Caco-2 (cell line): ENCODE measurements at regions of chr1 and their contacts with region 1.

Region 1: DNA sequence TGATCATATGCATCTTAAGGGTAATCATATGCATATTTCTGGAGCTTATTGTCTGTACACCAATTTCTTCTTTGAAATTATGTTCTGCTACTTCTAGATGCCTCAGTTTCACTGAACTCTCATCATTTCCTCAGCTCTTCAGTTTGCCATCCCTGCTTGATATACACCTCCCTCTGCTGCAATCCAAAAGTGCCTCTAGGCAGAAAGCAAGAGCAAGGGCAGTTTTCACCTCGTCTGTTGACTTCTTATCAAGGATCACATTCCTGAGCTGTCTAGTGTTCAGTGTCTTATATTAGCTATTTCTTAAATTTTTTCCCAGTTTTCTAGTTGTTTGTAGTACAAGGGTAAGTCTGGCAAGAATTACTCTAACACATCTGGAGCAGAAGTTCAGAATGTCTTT is 354.4 kb upstream of the DAB1 start:
- DNase-seq: no peak
- H3K4me3 ChIP-seq: no peak overlapping the region
- H3K4me3 Mint-ChIP-seq: no peak overlapping the region
- H3K27ac Mint-ChIP-seq: no peak overlapping the region
- H3K4me1 ChIP-seq: no peaks in the 10 kb centered on the region
- H3K4me1 Mint-ChIP-seq: no peaks in the 10 kb centered on the region
- H3K27me3 ChIP-seq: no peaks in the 10 kb centered on the region
- H3K27me3 Mint-ChIP-seq: peaks cover 10% of the 10 kb centered on the region
- CTCF ChIP-seq: no peak

Region 2: DNA sequence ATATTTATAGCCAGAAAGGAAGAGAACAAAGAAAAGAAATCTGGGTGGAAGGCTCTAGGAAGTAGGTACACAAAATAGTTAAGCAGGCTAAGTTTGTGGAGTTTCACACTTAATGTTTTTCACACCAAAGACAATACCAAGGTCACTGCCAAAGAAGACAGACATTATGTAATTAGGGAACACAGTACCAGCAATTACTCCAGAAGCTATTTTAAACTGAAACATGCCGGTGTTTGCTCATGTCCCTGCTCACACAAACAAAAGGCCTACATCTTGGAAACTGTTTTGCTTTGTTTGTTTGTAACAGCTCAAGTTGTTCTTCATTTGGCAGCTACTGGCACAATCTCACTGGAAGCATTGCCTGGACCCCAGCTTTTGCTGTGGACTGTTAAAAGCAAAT is 265.8 kb before region 1 on chr1:
- CTCF ChIA-PET with region 1: no interaction called
- POLR2A ChIA-PET with region 1: no interaction called
- intact Hi-C with region 1: loop called (anchors 5 kb)
- DNase-seq: no peak
- H3K4me3 ChIP-seq: no peak overlapping the region
- H3K4me3 Mint-ChIP-seq: no peak overlapping the region
- H3K27ac Mint-ChIP-seq: no peak overlapping the region
- H3K4me1 ChIP-seq: no peaks in the 10 kb centered on the region
- H3K4me1 Mint-ChIP-seq: no peaks in the 10 kb centered on the region
- H3K27me3 ChIP-seq: no peaks in the 10 kb centered on the region
- H3K27me3 Mint-ChIP-seq: peaks cover 9% of the 10 kb centered on the region
- CTCF ChIP-seq: no peak

Region 3: DNA sequence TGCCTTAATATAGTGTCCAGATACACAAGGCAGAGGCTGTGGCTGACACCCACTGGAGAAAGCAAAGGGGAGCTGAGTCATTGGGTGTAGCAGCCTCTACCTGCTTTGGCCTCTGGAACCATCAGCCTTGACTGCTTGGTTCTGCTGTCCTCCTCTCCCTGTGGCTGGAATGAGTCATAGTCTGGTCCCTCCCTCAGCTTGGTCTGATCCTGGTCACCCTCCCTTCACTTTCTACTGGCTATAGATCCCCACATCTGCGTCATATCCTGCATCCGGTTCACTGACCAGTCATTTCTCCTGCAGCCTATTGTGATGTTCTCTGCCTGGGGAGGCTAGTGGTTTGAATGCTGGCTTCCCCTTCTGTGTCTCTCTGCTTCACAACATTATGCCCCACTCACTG is 18.4 kb after region 1 on chr1:
- CTCF ChIA-PET with region 1: no interaction called
- POLR2A ChIA-PET with region 1: no interaction called
- intact Hi-C with region 1: no loop called
- DNase-seq: no peak
- H3K4me3 ChIP-seq: no peak overlapping the region
- H3K4me3 Mint-ChIP-seq: no peak overlapping the region
- H3K27ac Mint-ChIP-seq: no peak overlapping the region
- H3K4me1 ChIP-seq: no peaks in the 10 kb centered on the region
- H3K4me1 Mint-ChIP-seq: no peaks in the 10 kb centered on the region
- H3K27me3 ChIP-seq: no peaks in the 10 kb centered on the region
- H3K27me3 Mint-ChIP-seq: peaks cover 12% of the 10 kb centered on the region
- CTCF ChIP-seq: no peak